Ascending aorta (tissue), 2 donors: ENCODE measurements at regions of chr7 and their contacts with region 1.

Region 1: GRCh38 chr7:22559829-22560489 is 60.0 kb upstream of the STEAP1B start:
- DNase-seq: peak in 1 of 2 donors; percentile 85
- H3K4me3 ChIP-seq: no peak overlapping the region
- H3K27ac ChIP-seq: no peak overlapping the region
- H3K4me1 ChIP-seq: peaks cover 0 to 42% of the 10 kb centered on the region in 2 donors
- H3K27me3 ChIP-seq: no peaks in the 10 kb centered on the region
- CTCF ChIP-seq: peak; percentile 77 to 90 (median 89)

Region 2: GRCh38 chr7:22549667-22550513 is 10.1 kb before region 1 on chr7:
- intact Hi-C with region 1: no loop called
- DNase-seq: no peak
- H3K4me3 ChIP-seq: peak overlapping the region; percentile 34 to 60
- H3K27ac ChIP-seq: no peak overlapping the region
- H3K4me1 ChIP-seq: peaks cover 5 to 10% of the 10 kb centered on the region in 2 donors
- H3K27me3 ChIP-seq: no peaks in the 10 kb centered on the region
- CTCF ChIP-seq: peak in 2 of 3 experiments; percentile 70 to 80

Region 3: DNA sequence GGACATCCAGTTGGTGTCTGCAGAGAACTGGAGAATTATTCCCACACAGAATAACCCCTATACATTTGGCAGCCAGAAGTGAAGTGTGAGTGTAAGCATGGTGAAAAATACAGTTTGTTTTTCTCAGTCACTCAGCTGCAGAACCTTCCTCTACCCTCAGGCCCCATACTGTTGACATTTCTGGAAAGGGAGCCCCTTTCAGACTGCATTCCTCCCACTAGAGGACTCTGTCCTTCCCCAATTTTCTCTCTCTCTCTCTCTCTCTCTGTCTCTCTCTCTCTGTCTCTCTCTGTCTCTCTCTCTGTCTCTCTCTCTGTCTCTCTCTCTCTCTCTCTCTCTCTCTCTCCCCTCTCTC is 26.8 kb after region 1 on chr7:
- intact Hi-C with region 1: loop called (anchors 2 kb)
- DNase-seq: no peak
- H3K4me3 ChIP-seq: no peak overlapping the region
- H3K27ac ChIP-seq: no peak overlapping the region
- H3K4me1 ChIP-seq: peaks cover 8 to 27% of the 10 kb centered on the region in 2 donors
- H3K27me3 ChIP-seq: no peaks in the 10 kb centered on the region
- CTCF ChIP-seq: peak in 1 of 3 experiments; percentile 15

Region 4: GRCh38 chr7:22726345-22727185 is 166.6 kb after region 1 on chr7:
- intact Hi-C with region 1: loop called (anchors 1 kb)
- DNase-seq: peak in 1 of 2 donors; percentile 83
- H3K4me3 ChIP-seq: peak overlapping the region; percentile 57 to 61
- H3K27ac ChIP-seq: peak overlapping the region; percentile 60 to 83
- H3K4me1 ChIP-seq: peaks cover 5 to 36% of the 10 kb centered on the region in 2 donors
- H3K27me3 ChIP-seq: no peaks in the 10 kb centered on the region
- CTCF ChIP-seq: peak; percentile 21 to 55 (median 46)

Region 5: DNA sequence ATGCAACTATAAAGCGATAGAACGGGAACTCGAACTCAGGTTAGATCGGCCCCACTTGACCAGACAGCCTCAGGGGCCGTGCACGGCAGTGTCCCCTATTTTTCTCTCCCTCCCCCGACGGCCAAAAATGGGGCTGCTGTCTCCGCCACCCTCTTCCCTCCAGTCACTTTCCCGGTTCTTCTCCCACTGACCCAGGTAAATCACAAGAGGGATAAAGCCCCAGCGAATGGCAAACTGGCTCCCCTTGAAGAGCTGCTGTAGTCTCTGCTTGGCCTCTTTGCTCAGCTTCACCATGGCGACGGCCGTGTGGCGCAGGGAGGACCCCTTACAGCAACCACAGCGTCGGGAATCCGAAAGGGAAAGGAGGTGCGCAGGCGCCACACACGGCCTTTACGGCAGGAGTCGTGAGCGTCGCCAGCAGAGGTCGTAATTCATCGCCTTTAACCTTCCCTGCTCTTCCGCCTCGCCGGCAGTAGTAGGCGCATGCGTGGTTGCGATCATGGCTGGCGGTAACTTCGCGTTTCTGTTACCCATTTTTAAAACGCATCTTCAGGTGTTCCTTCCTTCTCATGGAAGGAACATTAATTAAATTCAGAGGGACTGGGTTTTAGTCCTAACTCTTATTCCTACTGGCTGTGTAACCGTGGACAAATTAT is 262.7 kb after region 1 on chr7 and contains the start of gene TOMM7:
- intact Hi-C with region 1: loop called (anchors 1 kb)
- DNase-seq: peak; percentile 40 to 91
- H3K4me3 ChIP-seq: peak within 1 kb of the TSS; percentile 74 to 86
- H3K27ac ChIP-seq: peak within 1 kb of the TSS; percentile 67 to 80
- H3K4me1 ChIP-seq: peaks cover 3 to 9% of the 10 kb centered on the region in 2 donors
- H3K27me3 ChIP-seq: no peaks in the 10 kb centered on the region
- CTCF ChIP-seq: peak; percentile 24 to 55 (median 54)
- total RNA-seq, gene TOMM7: 65.1 TPM

Region 6: GRCh38 chr7:23105644-23106056 is 545.7 kb after region 1 on chr7 and contains the start of gene KLHL7:
- intact Hi-C with region 1: loop called (anchors 2 kb)
- DNase-seq: peak; percentile 87 to 99
- H3K4me3 ChIP-seq: peak within 1 kb of the TSS; percentile 88 to 96
- H3K27ac ChIP-seq: peak within 1 kb of the TSS; percentile 89 to 92
- H3K4me1 ChIP-seq: peaks cover 4 to 26% of the 10 kb centered on the region in 2 donors
- H3K27me3 ChIP-seq: no peaks in the 10 kb centered on the region
- CTCF ChIP-seq: no peak
- total RNA-seq, gene KLHL7: 1.2 TPM